ENCODE measurements at regions of chr7 and their contacts with region 1.

Region 1: DNA sequence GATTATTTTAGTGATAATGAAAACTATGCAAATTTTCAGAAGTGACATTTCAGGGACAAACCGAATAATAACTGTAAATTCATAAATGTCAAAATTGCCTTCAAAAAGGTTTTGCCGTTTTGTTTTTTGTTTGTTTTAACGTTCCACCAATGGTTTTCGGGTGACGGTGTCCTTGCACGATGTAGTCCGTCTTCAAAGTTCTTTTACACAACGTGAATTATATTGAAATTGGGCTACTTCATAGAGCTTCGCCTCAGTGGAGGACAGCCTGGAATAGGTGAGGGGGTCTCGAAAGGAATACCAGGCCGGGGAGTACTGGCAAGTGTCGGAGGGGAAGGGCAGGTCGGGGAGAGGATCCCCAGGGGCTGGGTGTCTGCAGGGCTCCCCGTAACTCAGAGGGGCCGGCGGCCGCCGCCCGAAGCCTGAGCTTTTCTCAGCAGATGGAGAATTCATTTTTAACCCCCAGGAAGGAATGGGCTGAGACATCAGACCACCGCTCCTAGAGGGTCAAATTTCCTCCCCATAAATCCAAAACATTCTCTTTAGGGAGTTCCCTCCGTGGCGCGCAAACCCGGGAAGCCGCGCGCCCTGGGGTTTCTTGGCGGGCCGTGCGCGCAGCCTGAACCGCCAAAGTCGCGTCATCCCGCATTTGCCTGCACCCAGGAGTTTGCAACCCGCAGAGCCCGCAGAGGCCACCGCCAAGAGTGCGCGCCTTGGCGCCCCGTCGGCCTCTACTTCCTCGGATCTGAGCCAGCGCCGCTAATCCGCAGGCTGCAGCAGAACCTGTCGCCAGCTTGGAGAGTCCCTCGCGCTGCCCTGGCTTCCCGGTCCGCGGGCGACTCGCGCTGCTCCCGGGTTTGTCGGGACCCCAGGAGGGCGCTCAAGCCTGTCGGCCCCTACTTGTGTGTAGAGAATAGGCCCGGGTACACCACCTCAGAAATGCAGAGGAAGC is 17.3 kb upstream of the EVX1 start:
- DNase-seq: no peak
- H3K4me3 ChIP-seq: no peak overlapping the region
- H3K27ac ChIP-seq: no peak overlapping the region
- H3K4me1 ChIP-seq: no peaks in the 10 kb centered on the region
- H3K27me3 ChIP-seq: peaks cover 19% of the 10 kb centered on the region
- CTCF ChIP-seq: no peak

Region 2: DNA sequence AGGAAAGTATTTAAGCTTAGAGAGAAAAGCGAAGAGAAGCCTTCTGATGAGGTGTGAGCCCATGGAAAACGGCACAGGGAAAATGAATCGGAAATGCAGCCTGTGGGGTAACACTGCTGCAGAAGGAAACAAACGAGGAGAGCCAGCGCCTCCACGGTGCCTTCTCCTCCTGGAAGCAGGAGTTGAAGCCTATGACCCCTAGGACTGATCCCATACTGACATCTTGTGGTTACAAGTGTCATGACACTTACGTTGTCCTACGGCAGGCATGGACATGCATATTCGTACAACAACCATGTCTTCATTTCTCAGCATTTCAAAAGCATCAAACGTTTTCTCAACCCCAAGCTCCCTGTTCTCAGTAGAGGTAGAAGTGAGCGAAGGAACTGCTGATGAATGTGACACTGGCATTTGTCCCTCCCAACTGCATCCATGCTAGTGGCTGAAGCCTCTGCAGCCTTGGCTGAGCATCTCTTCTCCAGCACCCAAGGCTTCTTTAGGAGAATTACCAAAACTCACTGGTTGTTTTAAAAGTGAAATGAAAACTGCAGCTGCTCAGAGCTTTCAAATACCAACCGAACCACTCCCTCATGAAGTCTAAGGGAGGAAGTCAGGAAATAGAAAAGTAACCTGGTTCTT is 795.2 kb after region 1 on chr7:
- intact Hi-C with region 1: loop called (anchors 10 kb)
- DNase-seq: peak; percentile 67
- H3K4me3 ChIP-seq: no peak overlapping the region
- H3K27ac ChIP-seq: no peak overlapping the region
- H3K4me1 ChIP-seq: no peaks in the 10 kb centered on the region
- H3K27me3 ChIP-seq: no peaks in the 10 kb centered on the region
- CTCF ChIP-seq: peak; percentile 82

Measured in colonic mucosa (tissue), 4 donors.